Mammary epithelial cell (primary cell): ENCODE measurements at regions of chr1 and their contacts with region 1.

Region 1: GRCh38 chr1:90402893-90403849 is 313.9 kb downstream of the BARHL2 start:
- DNase-seq: peak; percentile 98
- H3K4me3 ChIP-seq: no peak overlapping the region
- H3K27ac ChIP-seq: peak overlapping the region; percentile 71
- H3K4me1 ChIP-seq: peaks cover 43% of the 10 kb centered on the region
- H3K27me3 ChIP-seq: no peaks in the 10 kb centered on the region
- CTCF ChIP-seq: no peak

Region 2: DNA sequence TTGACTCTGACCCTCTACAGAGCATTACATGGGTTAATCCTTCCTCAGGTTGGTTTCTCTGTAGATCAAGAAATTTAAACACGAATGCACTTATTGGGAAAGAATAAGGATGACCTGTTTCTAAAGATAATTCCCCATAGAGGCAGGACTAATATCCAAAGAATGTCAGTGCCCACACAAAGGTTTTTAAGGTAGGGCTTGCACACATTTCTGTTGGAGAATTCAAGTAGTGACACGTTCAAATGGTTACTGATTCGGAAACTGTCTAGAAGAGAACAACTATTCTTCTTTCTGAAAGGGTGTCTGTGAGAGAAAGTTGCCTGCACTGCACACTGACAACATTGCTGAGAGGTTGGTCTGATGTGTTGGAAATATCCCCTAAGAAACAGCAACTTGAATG is 241.0 kb before region 1 on chr1:
- CTCF ChIA-PET with region 1: no interaction called
- dilution Hi-C with region 1: no loop called
- in situ Hi-C with region 1: no loop called
- intact Hi-C with region 1: loop called (anchors 5 kb)
- DNase-seq: peak; percentile 94
- H3K4me3 ChIP-seq: no peak overlapping the region
- H3K27ac ChIP-seq: peak overlapping the region; percentile 73
- H3K4me1 ChIP-seq: peaks cover 12% of the 10 kb centered on the region
- H3K27me3 ChIP-seq: no peaks in the 10 kb centered on the region
- CTCF ChIP-seq: no peak